SK-N-SH (cell line): ENCODE measurements at regions of chr7 and their contacts with region 1.

Region 1: DNA sequence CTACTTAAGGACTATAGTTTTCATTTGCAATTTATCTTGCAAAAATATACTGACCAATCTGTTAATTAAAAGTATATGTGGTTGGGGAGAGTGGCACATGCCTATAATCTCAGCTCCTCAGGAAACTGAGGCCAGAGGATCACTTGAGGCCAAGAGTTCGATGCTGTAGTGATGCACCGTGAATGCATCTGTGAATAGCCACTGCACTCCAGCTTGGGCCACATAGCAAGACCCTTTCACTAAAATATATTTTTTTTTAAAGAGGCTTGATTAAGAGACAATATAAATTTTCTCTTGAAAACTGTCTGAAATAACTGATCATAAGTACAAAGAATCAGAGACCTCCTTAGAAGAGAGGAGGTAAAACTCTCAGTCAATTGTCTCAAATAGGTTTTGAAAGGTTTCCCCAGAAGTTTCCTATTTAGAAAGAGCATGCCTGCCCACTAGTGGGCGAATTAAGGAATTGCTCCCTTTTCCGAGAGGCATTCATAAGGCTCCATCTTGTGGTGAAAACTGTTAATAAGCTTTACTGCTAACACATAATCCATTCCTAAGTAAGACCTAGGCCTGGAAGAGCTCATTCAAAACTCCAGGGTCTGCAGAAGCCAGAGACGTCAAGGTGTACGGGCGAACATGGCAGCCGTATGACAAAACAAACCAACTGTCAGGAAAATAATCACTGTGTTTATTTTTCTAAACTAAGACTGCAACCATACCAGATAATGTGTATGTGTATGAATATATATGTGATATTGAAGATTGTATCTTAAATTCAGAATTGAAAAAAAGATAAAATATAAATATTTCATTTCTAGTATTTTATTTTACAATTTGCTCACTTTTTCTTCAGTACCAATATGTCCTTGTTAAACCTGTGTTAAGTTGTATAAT is 6.8 kb upstream of the TAS2R40 start:
- DNase-seq: peak; percentile 77
- H3K4me3 ChIP-seq: no peak overlapping the region; a peak in 1 of 4 replicates
- H3K27ac ChIP-seq: no peak overlapping the region
- H3K4me1 ChIP-seq: no peaks in the 10 kb centered on the region
- H3K27me3 ChIP-seq: peaks cover 7% of the 10 kb centered on the region; the same call in 1 of the 2 replicates
- CTCF ChIP-seq: peak; percentile 100
- EP300 ChIP-seq: no peak
- RAD21 ChIP-seq: peak; percentile 100

Region 2: DNA sequence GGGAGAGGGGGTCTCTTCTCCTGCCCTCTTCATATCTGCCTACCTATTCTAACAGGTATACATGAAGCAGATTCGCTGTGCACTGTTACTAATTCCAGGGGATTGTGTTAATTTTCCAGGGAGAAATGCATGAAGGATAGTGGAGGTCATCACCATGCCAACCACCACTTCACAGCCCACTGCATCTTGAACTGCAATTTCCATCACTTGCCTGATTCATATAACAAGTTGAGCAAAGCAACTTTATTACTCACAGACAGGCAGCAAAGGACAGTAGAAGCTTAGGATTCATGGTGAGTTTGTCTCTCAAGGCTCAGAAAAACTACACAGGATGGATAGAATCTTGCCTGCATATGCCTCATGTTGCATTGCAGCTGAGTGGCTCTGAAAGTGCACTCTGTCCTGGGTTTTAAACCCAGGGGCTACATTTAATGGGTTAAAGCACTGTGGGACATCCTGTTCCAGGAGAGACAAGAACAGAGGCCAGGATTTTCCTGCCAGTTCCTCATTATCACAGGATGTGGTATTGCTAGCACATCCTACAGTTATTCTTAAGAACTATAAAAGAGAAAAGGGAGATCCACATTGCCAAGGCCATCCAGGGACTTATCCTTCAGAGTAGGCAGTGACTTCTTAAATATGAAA is 602.7 kb before region 1 on chr7:
- CTCF ChIA-PET with region 1: interaction called, 10 read pairs
- POLR2A ChIA-PET with region 1: no interaction called
- DNase-seq: peak; percentile 63
- H3K4me3 ChIP-seq: no peak overlapping the region
- H3K27ac ChIP-seq: peak overlapping the region in 1 of 2 experiments; percentile 98; a peak in 3 of 4 replicates
- H3K4me1 ChIP-seq: peaks cover 0 to 17% of the 10 kb centered on the region in 2 experiments; a peak in 2 of 4 replicates
- H3K27me3 ChIP-seq: no peaks in the 10 kb centered on the region; the same call in 1 of the 2 replicates
- CTCF ChIP-seq: no peak
- EP300 ChIP-seq: peak; percentile 23 to 68; a peak in 2 of 4 replicates
- RAD21 ChIP-seq: no peak

Region 3: DNA sequence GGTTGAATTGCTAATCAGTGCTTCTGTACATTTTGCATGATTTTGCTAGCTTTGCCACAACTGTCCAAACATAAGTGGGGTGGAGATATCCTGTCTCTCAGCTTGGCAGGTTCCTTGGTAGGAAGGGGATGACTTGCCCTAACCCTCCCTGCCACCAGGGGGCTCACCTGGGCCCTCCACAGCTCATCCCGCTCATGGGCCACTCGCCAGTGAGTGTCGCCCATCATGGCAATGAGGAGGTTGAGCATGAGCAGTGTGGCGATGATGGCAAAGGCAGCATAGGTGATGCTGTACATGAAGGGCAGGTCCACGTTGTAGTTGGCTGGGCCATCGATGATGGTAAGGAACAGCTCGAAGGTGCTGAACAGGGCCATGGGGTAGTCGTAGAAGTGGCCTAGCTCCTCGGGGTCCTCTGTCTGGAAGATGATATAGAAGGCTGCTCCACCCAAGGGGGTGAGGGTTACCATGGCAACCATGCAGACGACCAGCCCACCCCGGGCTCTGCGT is 341.7 kb before region 1 on chr7:
- CTCF ChIA-PET with region 1: interaction called, 15 read pairs
- POLR2A ChIA-PET with region 1: no interaction called
- DNase-seq: peak; percentile 67
- H3K4me3 ChIP-seq: no peak overlapping the region
- H3K27ac ChIP-seq: no peak overlapping the region
- H3K4me1 ChIP-seq: no peaks in the 10 kb centered on the region
- H3K27me3 ChIP-seq: peaks cover 30% of the 10 kb centered on the region; the same call in 1 of the 2 replicates
- CTCF ChIP-seq: peak; percentile 61
- EP300 ChIP-seq: no peak
- RAD21 ChIP-seq: no peak

Region 4: GRCh38 chr7:143008007-143008901 is 206.8 kb before region 1 on chr7:
- CTCF ChIA-PET with region 1: interaction called, 450 read pairs
- POLR2A ChIA-PET with region 1: no interaction called
- DNase-seq: peak; percentile 78
- H3K4me3 ChIP-seq: no peak overlapping the region; a peak in 1 of 4 replicates
- H3K27ac ChIP-seq: no peak overlapping the region
- H3K4me1 ChIP-seq: 0 out of 4 replicates have a peak, but pooled peaks cover 0 to under 1% of the 10 kb centered on the region in 2 experiments
- H3K27me3 ChIP-seq: no peaks in the 10 kb centered on the region; the same call in 1 of the 2 replicates
- CTCF ChIP-seq: peak; percentile 100
- EP300 ChIP-seq: no peak
- RAD21 ChIP-seq: peak; percentile 96

Region 5: GRCh38 chr7:143203386-143203785 is 11.6 kb before region 1 on chr7:
- CTCF ChIA-PET with region 1: interaction called, 47 read pairs
- POLR2A ChIA-PET with region 1: no interaction called
- DNase-seq: no peak
- H3K4me3 ChIP-seq: no peak overlapping the region
- H3K27ac ChIP-seq: no peak overlapping the region
- H3K4me1 ChIP-seq: no peaks in the 10 kb centered on the region
- H3K27me3 ChIP-seq: peaks cover 30% of the 10 kb centered on the region; the same call in 1 of the 2 replicates
- CTCF ChIP-seq: no peak
- EP300 ChIP-seq: no peak
- RAD21 ChIP-seq: no peak